Left cardiac atrium (tissue), 4 donors: ENCODE measurements at regions of chr20 and their contacts with region 1.

Region 1: DNA sequence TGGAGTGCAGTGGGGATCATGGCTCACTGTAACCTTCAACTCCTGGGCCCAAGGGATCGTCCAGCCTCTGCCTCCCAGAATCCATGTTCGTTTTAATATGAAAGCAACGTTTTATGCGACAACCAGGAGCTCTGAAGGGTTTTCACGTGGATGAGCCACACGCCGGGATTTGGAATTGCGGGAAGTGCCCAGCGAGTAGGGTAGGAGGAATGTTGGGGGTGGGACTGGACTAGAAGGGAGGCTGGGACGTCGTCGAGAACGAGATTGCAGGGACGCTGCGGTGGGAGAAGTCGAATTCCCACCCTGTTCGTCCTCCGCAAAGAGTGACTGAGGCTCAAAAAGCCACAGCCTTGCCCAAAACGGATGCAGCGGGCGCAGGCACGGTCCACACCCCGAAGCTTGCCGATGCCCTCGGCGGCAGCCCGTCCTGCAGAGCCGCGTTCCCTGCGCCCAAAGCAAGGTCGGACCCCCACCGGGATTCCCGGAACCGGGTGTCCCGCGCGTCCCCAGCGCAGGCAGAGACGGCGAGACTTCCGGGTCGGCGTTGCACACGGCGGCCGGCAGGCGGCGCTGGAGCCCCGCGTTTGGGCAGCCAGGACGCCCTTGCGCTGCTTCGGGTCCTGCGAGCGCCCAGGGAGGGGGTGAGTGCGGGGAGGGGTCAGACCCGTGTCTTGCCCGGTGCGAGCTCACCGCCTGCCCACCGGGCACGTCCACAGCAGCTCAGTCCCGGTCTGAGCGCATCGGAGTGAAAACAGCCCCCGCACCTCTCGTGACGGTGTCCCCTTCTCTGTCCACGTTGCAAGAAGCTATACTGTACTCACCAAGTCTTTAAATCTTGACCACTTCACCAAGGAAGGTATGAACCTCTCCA is 87.8 kb downstream of the DHX35 start:
- DNase-seq: peak; percentile 82
- ATAC-seq: peak; percentile 87 to 91

Region 2: GRCh38 chr20:38304845-38305447 is 745.0 kb before region 1 on chr20:
- intact Hi-C with region 1: no loop called
- DNase-seq: peak; percentile 40
- ATAC-seq: peak; percentile 19 to 22

Region 3: DNA sequence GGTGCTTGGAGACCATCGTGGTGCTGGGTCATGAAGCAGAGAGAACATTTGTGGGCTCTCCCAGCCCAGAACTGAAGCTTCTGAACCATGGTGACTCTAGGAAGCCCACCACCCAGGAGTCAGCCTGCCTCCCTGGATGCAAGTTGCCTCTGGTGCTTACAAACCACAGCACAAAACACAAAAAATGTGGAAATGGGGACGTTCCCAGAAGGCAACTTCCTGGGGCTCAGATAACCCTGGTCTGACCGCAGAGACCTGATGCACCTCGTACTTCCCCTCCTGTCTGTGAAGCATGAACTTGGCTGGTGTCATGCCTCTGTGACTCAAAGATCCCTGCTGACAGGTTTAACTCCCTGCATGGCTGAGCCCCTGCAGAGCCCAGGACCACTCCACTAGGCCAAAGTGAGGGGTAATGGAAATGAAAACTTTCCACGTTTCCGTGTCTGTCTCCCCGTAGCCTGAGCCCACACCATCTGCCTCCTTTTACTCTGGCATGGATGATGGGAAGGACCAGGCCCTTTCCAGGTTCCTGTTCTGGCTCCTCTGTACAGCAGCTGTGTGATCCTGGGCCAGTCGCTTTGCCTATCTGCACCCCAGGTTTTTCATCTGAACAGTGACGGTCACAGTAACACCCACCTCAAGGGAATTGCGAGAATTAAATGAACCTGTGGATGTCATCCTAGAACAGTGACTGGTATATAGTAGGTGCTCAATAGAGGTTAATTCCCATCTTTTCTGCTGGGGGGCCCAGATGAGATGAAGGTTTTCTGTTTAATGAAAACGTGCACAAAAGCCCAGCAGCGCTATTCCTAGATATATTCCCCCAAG is 186.7 kb before region 1 on chr20:
- intact Hi-C with region 1: no loop called
- DNase-seq: no peak
- ATAC-seq: no peak

Region 4: GRCh38 chr20:38926142-38926933 is 123.6 kb before region 1 on chr20 and contains the start of gene FAM83D:
- intact Hi-C with region 1: loop called (anchors 1 to 5 kb)
- DNase-seq: peak; percentile 95
- ATAC-seq: peak; percentile 98 to 99
- total RNA-seq, gene FAM83D: 0.42 to 0.65 TPM

Region 5: GRCh38 chr20:39080326-39080725 is 30.4 kb after region 1 on chr20:
- intact Hi-C with region 1: loop called in 1 of 2 experiments (anchors 1 kb)
- DNase-seq: no peak
- ATAC-seq: no peak